ENCODE measurements at regions of chr5 and their contacts with region 1.

Region 1: GRCh38 chr5:98773464-98774191 is at the start of gene RGMB:
- DNase-seq: peak; percentile 99
- H3K4me3 ChIP-seq: peak within 1 kb of the TSS; percentile 84 to 98 (median 87)
- H3K27ac ChIP-seq: peak within 1 kb of the TSS; percentile 76
- H3K4me1 ChIP-seq: peaks cover 35% of the 10 kb centered on the region
- H3K27me3 ChIP-seq: no peaks in the 10 kb centered on the region
- CTCF ChIP-seq: no peak
- POLR2A ChIP-seq: peak; percentile 92
- total RNA-seq, gene RGMB: 27.5 and 31.3 TPM in 2 replicates

Region 2: DNA sequence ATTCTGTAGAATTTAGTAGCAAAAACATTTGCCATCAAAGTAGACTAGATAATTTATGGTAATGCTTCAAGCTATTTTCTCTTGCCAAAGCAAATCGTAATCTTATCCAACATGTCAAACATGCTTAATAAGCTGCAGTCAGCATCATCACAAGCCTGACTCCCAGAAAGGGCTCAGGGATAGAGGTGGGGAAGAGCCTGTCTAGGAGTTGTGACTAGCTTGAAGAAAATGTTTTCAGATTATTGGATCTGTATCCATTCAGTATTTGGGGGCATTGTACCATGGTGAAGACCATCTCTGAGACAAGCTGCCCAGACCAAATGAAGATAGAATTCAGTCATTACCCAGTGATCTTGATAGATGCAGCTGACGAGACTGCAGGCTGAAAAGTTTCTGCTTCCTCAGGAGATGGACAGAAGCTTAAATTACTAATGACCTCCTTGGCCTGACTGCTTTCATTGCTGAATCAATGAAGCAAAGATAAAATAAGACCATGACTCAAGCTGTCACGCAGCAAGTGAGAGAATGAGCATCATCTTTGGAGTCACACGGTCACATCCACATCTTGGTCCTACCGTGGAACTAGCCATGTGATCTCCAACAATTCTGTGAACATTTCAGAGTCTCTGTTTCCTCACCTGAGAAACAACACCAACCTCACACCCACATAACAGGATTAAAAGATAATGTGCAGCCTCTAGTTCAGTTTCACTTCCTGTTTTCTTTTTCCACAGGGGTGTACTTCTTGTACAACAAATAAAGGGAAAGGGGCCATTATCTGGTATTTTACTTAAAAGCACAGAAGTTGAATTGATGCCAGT is 1887.9 kb before region 1 on chr5:
- CTCF ChIA-PET with region 1: no interaction called
- POLR2A ChIA-PET with region 1: no interaction called
- dilution Hi-C with region 1: no loop called
- intact Hi-C with region 1: loop called (anchors 5 kb)
- DNase-seq: no peak
- H3K4me3 ChIP-seq: no peak overlapping the region
- H3K27ac ChIP-seq: no peak overlapping the region
- H3K4me1 ChIP-seq: peaks cover 25% of the 10 kb centered on the region
- H3K27me3 ChIP-seq: no peaks in the 10 kb centered on the region
- CTCF ChIP-seq: no peak
- POLR2A ChIP-seq: no peak

Region 3: DNA sequence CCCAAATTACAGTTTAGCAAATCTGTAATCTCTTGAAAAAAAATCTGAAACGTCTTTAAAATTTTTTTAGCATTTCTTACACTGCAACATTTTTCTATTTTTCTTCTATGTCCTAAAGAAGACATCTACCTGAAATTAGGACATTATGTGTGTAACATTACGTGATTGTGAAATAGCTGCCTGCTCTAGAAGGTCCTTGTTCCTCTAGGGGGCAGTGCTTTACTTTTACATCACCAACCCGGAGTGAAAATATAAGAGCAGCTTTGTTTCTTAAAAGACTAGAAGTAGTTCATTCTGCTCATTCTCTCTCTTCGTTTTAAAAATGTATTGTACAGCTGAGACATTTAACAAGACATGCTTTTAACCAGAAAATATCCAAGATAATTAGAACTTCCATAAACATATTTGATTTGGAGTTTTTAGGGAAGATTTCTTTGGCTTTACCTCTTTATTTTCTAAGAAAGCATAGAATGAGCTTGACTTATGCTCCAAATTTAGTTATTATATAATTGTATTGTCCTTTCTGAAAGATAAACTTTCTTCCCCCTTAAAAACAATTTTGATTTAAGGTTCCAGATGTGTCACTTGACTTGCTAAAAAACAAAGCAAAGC is 1542.5 kb before region 1 on chr5:
- CTCF ChIA-PET with region 1: interaction called, 94 read pairs
- POLR2A ChIA-PET with region 1: no interaction called
- dilution Hi-C with region 1: no loop called
- intact Hi-C with region 1: loop called (anchors 1 kb)
- DNase-seq: peak; percentile 78
- H3K4me3 ChIP-seq: no peak overlapping the region
- H3K27ac ChIP-seq: no peak overlapping the region
- H3K4me1 ChIP-seq: peaks cover 6% of the 10 kb centered on the region
- H3K27me3 ChIP-seq: no peaks in the 10 kb centered on the region
- CTCF ChIP-seq: peak; percentile 54 to 69
- POLR2A ChIP-seq: no peak

Region 4: GRCh38 chr5:97658116-97658900 is 1115.3 kb before region 1 on chr5:
- CTCF ChIA-PET with region 1: interaction called, 4 read pairs
- POLR2A ChIA-PET with region 1: no interaction called
- dilution Hi-C with region 1: no loop called
- intact Hi-C with region 1: loop called (anchors 5 kb)
- DNase-seq: peak; percentile 56
- H3K4me3 ChIP-seq: no peak overlapping the region
- H3K27ac ChIP-seq: no peak overlapping the region
- H3K4me1 ChIP-seq: peaks cover 19% of the 10 kb centered on the region
- H3K27me3 ChIP-seq: no peaks in the 10 kb centered on the region
- CTCF ChIP-seq: no peak
- POLR2A ChIP-seq: no peak

Region 5: DNA sequence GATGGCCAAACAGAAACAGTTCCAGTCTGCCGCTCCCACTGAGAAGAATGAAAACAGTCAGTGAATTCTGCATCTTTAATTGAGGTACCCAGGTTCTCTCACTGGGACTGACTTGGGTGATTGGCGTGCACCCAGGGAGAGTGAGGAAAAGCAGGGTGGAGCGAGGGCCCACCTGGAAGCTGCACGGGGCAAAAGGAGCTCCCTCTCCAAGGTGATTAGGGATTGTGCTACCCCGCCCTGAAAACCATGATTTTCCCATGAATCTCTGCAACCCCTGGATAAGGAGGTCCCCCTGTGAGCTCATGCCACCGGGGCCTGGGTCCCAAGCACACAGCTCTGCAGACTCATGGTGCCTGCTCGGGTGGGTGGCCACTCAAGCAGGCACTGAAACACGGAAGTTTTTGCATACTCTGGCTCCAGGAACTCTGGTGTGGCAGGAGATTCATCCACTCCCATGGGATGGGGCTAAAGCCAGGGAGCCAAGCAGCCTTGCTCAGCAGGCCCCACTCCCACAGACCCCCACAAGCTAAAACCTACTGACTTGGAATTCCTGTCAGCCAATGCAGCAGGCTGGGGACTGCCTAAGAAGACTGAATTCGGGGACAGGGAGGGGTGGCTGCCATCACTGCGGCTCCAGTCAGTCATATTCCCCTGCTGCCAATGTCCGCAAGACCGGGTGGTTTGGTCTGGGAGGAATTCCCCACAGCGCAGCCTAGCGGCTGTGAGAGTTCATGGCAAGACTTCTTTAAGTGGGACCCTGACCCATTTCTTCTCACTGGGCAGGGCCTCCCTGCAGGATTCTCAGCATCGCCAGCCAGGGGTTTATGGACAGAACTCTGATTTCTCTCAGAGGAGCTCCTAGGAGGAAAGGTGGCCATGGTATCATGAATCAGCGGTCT is 652.3 kb before region 1 on chr5:
- CTCF ChIA-PET with region 1: interaction called, 13 read pairs
- POLR2A ChIA-PET with region 1: no interaction called
- dilution Hi-C with region 1: no loop called
- intact Hi-C with region 1: no loop called
- DNase-seq: no peak
- H3K4me3 ChIP-seq: no peak overlapping the region
- H3K27ac ChIP-seq: no peak overlapping the region
- H3K4me1 ChIP-seq: no peaks in the 10 kb centered on the region
- H3K27me3 ChIP-seq: no peaks in the 10 kb centered on the region
- CTCF ChIP-seq: no peak
- POLR2A ChIP-seq: no peak

Region 6: DNA sequence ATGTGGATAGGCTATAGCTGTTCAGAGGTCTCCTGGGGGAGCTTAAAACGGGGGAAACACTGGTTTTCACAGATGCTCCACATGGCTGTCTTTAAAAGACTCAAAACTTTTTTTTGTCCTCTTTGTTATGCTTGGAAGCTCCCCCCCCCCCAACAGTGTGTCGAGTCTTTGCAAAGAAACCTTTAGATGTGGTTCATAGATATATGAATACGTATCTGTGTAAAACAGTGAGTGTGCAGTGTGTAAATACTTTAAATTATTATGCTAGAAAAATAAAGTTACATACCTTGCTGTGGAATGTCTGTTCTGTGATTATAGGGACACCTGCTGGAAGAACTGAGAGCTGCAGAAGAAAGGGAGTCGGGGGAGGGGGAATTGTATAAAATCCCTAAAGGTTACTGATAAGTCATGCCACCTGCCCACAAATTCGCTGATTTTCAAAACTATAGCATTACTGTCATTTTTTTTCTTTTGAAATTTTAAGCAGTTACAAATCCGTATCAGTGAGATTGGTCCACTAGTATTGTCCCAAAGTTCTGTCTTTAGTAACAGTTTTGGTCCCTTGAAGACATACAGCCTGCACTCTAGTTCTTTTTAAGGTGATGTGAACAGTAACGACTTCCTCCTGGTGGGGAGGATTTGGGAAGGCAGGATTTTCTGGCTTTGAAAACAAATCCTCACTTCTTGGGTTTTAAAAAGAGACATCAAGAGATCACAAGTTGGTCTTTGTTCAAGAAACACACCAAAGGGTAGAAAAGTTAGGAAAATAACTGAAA is 22.8 kb after region 1 on chr5:
- CTCF ChIA-PET with region 1: interaction called, 94 read pairs
- POLR2A ChIA-PET with region 1: interaction called, 5 read pairs
- dilution Hi-C with region 1: no loop called
- intact Hi-C with region 1: loop called (anchors 1 kb)
- DNase-seq: peak; percentile 74
- H3K4me3 ChIP-seq: no peak overlapping the region
- H3K27ac ChIP-seq: peak overlapping the region; percentile 43
- H3K4me1 ChIP-seq: no peaks in the 10 kb centered on the region
- H3K27me3 ChIP-seq: no peaks in the 10 kb centered on the region
- CTCF ChIP-seq: peak; percentile 68 to 70
- POLR2A ChIP-seq: no peak

Region 7: DNA sequence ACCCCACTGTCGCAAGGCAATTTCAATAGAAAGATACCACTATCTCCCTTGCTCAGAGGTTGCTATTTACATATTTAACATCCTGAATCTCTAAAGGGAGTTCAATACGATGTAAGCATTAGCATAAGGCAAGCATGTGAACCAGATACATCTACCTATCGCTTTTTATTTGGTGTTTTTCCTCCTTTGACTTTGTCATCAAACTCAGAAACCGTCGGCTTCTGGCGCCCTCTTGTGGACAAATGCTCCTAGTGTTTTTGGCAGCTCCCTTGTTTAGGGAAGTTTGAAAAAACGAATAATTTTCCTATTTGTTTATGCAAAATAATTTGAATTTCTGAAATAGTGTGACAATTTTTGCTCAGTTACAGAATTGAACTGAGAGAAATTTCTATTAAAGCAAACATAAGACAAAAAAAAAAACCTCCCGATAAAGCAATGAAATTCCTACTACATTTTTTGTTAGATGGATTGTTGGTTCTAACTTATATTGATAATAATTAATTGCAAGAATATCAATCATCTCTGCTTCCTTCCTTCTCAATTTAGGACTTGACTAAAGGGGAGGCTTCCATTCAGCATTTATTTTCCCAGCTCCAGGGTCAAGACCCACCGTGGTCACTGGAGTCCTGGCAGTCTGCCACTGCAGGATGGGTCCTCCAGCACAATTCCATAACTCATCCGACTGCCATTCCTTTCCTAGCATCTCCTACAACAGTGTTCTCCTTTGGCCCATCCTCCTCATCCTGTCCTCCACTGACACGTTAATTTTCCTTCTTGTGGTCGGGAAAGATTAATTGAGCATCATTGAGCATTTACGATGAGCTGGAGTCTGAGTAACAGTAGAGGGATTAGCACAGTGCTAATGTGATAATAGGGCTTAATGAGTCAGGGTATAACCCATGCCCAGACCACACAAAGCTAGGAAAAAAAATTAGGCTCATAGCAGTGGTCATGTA is 287.0 kb after region 1 on chr5:
- CTCF ChIA-PET with region 1: interaction called, 12 read pairs
- POLR2A ChIA-PET with region 1: no interaction called
- dilution Hi-C with region 1: no loop called
- intact Hi-C with region 1: loop called (anchors 5 kb)
- DNase-seq: peak; percentile 77
- H3K4me3 ChIP-seq: no peak overlapping the region
- H3K27ac ChIP-seq: no peak overlapping the region
- H3K4me1 ChIP-seq: peaks cover 3% of the 10 kb centered on the region
- H3K27me3 ChIP-seq: no peaks in the 10 kb centered on the region
- CTCF ChIP-seq: peak; percentile 64 to 86
- POLR2A ChIP-seq: no peak

Measured in endothelial cell of umbilical vein (primary cell).